Panc1 (cell line): ENCODE measurements at regions of chr3 and their contacts with region 1.

Region 1: GRCh38 chr3:21599890-21600289 is 151.1 kb downstream of the ZNF385D start:
- DNase-seq: no peak
- ATAC-seq: no peak
- H3K4me3 ChIP-seq: no peak overlapping the region
- H3K27ac ChIP-seq: no peak overlapping the region
- H3K4me1 ChIP-seq: no peaks in the 10 kb centered on the region
- H3K27me3 ChIP-seq: no peaks in the 10 kb centered on the region
- CTCF ChIP-seq: no peak

Region 2: DNA sequence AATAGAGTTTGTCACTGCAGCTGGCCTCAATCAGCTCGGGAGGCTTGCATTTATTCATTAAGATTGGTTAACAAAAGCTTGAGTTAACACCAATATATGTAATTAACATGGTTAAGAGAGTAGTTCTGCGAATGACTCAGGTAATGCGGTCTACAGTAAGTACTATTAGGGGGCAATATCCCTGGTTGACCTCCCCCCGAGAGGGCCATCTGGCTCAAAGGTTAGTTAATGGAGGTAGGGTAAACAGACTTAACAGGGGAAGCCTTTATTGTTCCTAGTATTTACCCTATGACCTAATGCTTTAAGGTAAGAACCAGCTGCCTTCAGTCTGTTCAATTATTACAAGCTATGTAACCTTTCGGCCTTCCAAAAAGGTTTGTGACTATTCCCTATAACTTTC is 1010.6 kb before region 1 on chr3:
- CTCF ChIA-PET with region 1: no interaction called
- POLR2A ChIA-PET with region 1: no interaction called
- in situ Hi-C with region 1: no loop called
- intact Hi-C with region 1: no loop called
- DNase-seq: no peak
- ATAC-seq: no peak
- H3K4me3 ChIP-seq: no peak overlapping the region
- H3K27ac ChIP-seq: no peak overlapping the region
- H3K4me1 ChIP-seq: no peaks in the 10 kb centered on the region
- H3K27me3 ChIP-seq: no peaks in the 10 kb centered on the region
- CTCF ChIP-seq: no peak

Region 3: DNA sequence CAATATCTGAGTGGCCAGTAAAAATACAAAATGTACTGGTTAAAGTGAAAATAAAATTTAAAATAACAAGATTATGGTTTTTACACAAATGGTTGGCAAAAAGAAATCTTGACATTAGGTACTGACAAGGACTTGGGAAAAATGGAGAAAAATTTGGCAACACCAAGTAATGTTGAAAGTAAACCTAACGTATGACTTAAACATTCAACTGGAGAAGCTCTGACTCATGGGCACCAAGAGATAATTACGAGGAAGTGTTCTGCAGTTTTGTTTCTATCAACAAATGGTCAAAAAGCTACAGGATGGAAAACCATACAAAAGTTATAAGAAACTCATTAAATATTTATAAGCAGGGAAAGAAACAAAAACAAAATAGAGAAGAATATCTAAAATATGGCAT is 26.6 kb before region 1 on chr3:
- CTCF ChIA-PET with region 1: no interaction called
- POLR2A ChIA-PET with region 1: no interaction called
- in situ Hi-C with region 1: no loop called
- intact Hi-C with region 1: no loop called
- DNase-seq: no peak
- ATAC-seq: no peak
- H3K4me3 ChIP-seq: no peak overlapping the region
- H3K27ac ChIP-seq: no peak overlapping the region
- H3K4me1 ChIP-seq: no peaks in the 10 kb centered on the region
- H3K27me3 ChIP-seq: no peaks in the 10 kb centered on the region
- CTCF ChIP-seq: no peak

Region 4: GRCh38 chr3:21613372-21614070 is 13.6 kb after region 1 on chr3:
- CTCF ChIA-PET with region 1: interaction called, 13 read pairs
- POLR2A ChIA-PET with region 1: no interaction called
- in situ Hi-C with region 1: no loop called
- intact Hi-C with region 1: no loop called
- DNase-seq: no peak
- ATAC-seq: no peak
- H3K4me3 ChIP-seq: no peak overlapping the region
- H3K27ac ChIP-seq: no peak overlapping the region
- H3K4me1 ChIP-seq: no peaks in the 10 kb centered on the region
- H3K27me3 ChIP-seq: no peaks in the 10 kb centered on the region
- CTCF ChIP-seq: no peak